Activated naive CD4-positive, alpha-beta T cell treated with anti-CD3 and anti-CD28 coated beads for 36 hours (primary cell): ENCODE measurements at regions of chr3 and their contacts with region 1.

Region 1: GRCh38 chr3:129824926-129825541 is 68.5 kb downstream of the TMCC1 start:
- DNase-seq: peak; percentile 63
- H3K4me3 Mint-ChIP-seq: no peak overlapping the region
- H3K27ac Mint-ChIP-seq: no peak overlapping the region
- H3K4me1 Mint-ChIP-seq: peaks cover 19% of the 10 kb centered on the region
- H3K27me3 Mint-ChIP-seq: no peaks in the 10 kb centered on the region

Region 2: GRCh38 chr3:129383292-129383860 is 441.7 kb before region 1 on chr3:
- CTCF ChIA-PET with region 1: interaction called, 3 read pairs
- intact Hi-C with region 1: loop called (anchors 2 kb)
- DNase-seq: peak; percentile 65
- H3K4me3 Mint-ChIP-seq: no peak overlapping the region
- H3K27ac Mint-ChIP-seq: no peak overlapping the region
- H3K4me1 Mint-ChIP-seq: no peaks in the 10 kb centered on the region
- H3K27me3 Mint-ChIP-seq: no peaks in the 10 kb centered on the region

Region 3: GRCh38 chr3:129586746-129587430 is 238.1 kb before region 1 on chr3:
- CTCF ChIA-PET with region 1: no interaction called
- intact Hi-C with region 1: no loop called
- DNase-seq: no peak
- H3K4me3 Mint-ChIP-seq: no peak overlapping the region
- H3K27ac Mint-ChIP-seq: no peak overlapping the region
- H3K4me1 Mint-ChIP-seq: no peaks in the 10 kb centered on the region
- H3K27me3 Mint-ChIP-seq: no peaks in the 10 kb centered on the region

Region 4: DNA sequence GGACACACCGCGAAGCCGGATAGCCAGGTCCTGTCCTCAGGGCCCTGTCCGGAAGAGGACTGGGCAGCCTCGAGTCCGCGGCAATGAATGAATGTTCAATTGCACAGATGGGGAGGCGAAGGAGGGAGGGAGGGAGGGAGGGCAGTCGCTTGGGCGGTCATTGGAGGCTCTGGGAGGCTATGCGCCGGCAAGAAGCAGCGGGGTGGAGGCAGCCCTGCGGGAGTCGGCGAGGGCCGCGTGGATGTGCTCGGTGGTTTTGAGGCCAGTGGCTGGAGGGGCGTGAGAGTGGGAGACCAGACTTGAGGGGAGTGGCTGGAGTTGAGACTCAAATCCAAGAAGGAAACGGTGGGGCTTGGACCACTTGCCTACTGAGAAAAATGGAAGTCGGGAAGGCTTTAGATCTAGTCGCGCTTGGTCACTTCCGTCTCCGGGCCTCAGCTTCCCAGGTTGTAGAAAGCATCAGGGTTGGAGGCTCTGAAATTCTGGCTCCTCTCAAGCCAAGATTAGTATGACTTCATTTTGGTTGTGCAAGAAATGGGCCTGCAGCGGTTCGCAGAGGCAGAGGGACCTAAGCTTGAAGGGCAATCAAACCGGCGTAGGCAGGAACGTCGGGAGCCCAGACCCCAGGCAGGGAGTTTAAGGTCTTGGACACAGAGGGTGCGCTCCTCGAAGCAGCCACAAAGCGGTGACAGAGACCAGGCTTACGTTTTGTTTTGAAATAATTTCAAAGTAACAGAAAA is 197.4 kb before region 1 on chr3:
- CTCF ChIA-PET with region 1: interaction called, 15 read pairs
- intact Hi-C with region 1: loop called (anchors 1 kb)
- DNase-seq: peak; percentile 83
- H3K4me3 Mint-ChIP-seq: peak overlapping the region; percentile 92
- H3K27ac Mint-ChIP-seq: peak overlapping the region; percentile 65
- H3K4me1 Mint-ChIP-seq: peaks cover 10% of the 10 kb centered on the region
- H3K27me3 Mint-ChIP-seq: no peaks in the 10 kb centered on the region

Region 5: GRCh38 chr3:129934234-129935123 is 109.4 kb after region 1 on chr3:
- CTCF ChIA-PET with region 1: no interaction called
- intact Hi-C with region 1: loop called (anchors 2 kb)
- DNase-seq: peak; percentile 38
- H3K4me3 Mint-ChIP-seq: no peak overlapping the region
- H3K27ac Mint-ChIP-seq: no peak overlapping the region
- H3K4me1 Mint-ChIP-seq: peaks cover 2% of the 10 kb centered on the region
- H3K27me3 Mint-ChIP-seq: no peaks in the 10 kb centered on the region

Region 6: DNA sequence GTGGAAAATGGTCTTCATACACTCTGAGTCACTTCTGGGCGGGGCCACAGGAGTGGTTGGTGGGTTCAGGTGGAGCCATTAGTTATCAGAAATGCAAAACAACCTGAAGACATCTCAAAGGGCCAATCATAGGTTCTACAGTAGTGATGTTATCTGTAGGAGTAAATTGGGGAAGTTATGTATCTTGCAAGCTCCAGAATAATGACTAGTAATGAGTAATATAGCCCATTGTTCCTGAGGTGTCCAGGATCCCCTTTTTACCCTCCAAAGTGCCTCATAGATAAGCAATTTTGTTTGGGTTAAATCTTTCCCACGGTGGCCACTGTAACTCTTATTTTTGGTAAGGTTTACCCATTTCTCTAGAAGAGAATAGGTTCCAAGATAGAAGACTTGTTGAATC is 829.9 kb after region 1 on chr3:
- CTCF ChIA-PET with region 1: no interaction called
- intact Hi-C with region 1: no loop called
- DNase-seq: no peak
- H3K4me3 Mint-ChIP-seq: no peak overlapping the region
- H3K27ac Mint-ChIP-seq: no peak overlapping the region
- H3K4me1 Mint-ChIP-seq: no peaks in the 10 kb centered on the region
- H3K27me3 Mint-ChIP-seq: no peaks in the 10 kb centered on the region